Activated B cell treated with CpG ODN at 0.5 μM for 24 hours (primary cell): ENCODE measurements at regions of chr2 and their contacts with region 1.

Region 1: GRCh38 chr2:30266051-30266621 is 34.8 kb downstream of the LBH start:
- DNase-seq: no peak
- ATAC-seq: peak; percentile 80
- H3K4me3 Mint-ChIP-seq: peak overlapping the region; percentile 79
- H3K27ac Mint-ChIP-seq: peak overlapping the region; percentile 99
- H3K4me1 Mint-ChIP-seq: peaks cover 92% of the 10 kb centered on the region
- H3K27me3 Mint-ChIP-seq: no peaks in the 10 kb centered on the region
- CTCF ChIP-seq: no peak

Region 2: DNA sequence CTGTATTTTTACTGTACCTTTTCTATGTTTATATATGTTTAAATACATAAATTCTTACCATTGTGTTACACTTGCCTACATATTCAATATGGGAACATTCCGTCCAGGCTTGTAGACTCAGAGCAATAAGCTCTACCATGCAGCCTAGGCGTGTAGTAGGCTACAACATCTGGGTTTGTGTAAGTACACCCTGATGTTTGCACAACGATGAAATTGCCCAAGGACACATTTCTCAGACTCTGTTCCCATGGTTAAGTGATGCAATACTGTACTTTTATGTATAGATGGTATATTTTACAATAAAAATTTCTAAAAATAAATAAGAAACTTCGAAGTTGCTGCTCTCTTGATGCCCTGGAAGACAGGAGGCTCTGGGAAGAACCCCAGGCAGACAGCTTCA is 81.0 kb before region 1 on chr2:
- CTCF ChIA-PET with region 1: no interaction called
- POLR2A ChIA-PET with region 1: no interaction called
- intact Hi-C with region 1: no loop called
- DNase-seq: no peak
- ATAC-seq: no peak
- H3K4me3 Mint-ChIP-seq: no peak overlapping the region
- H3K27ac Mint-ChIP-seq: no peak overlapping the region
- H3K4me1 Mint-ChIP-seq: peaks cover 9% of the 10 kb centered on the region
- H3K27me3 Mint-ChIP-seq: no peaks in the 10 kb centered on the region
- CTCF ChIP-seq: no peak

Region 3: GRCh38 chr2:30282086-30282485 is 15.9 kb after region 1 on chr2:
- CTCF ChIA-PET with region 1: interaction called, 4 read pairs
- POLR2A ChIA-PET with region 1: interaction called, 43 read pairs
- intact Hi-C with region 1: loop called (anchors 2 kb)
- DNase-seq: peak; percentile 70
- ATAC-seq: peak; percentile 96
- H3K4me3 Mint-ChIP-seq: peak overlapping the region; percentile 61
- H3K27ac Mint-ChIP-seq: peak overlapping the region; percentile 82
- H3K4me1 Mint-ChIP-seq: peaks cover 98% of the 10 kb centered on the region
- H3K27me3 Mint-ChIP-seq: no peaks in the 10 kb centered on the region
- CTCF ChIP-seq: no peak

Region 4: GRCh38 chr2:30611583-30611982 is 345.4 kb after region 1 on chr2:
- CTCF ChIA-PET with region 1: no interaction called
- POLR2A ChIA-PET with region 1: no interaction called
- intact Hi-C with region 1: no loop called
- DNase-seq: no peak
- ATAC-seq: no peak
- H3K4me3 Mint-ChIP-seq: no peak overlapping the region
- H3K27ac Mint-ChIP-seq: no peak overlapping the region
- H3K4me1 Mint-ChIP-seq: peaks cover 29% of the 10 kb centered on the region
- H3K27me3 Mint-ChIP-seq: no peaks in the 10 kb centered on the region
- CTCF ChIP-seq: no peak

Region 5: DNA sequence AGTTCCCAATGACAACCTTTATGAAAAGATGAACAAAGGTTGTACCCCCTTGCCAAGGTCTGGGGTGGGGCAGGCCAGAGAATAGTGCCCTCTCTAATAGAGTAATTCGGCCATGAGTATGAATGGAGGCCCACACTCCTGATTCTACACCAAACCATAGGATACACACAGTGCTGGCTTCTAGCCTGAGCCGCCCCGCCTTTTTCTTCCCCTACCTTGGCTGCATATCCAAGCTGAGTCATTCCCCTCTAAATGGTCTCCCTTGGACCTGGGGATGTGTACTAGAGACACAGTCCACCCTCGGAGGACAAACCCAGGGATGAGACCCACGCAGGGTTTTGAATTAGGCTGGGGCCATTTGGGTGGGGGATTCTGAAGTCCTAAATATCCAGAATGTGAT is 648.3 kb after region 1 on chr2:
- CTCF ChIA-PET with region 1: no interaction called
- POLR2A ChIA-PET with region 1: no interaction called
- intact Hi-C with region 1: no loop called
- DNase-seq: no peak
- ATAC-seq: no peak
- H3K4me3 Mint-ChIP-seq: no peak overlapping the region
- H3K27ac Mint-ChIP-seq: no peak overlapping the region
- H3K4me1 Mint-ChIP-seq: no peaks in the 10 kb centered on the region
- H3K27me3 Mint-ChIP-seq: no peaks in the 10 kb centered on the region
- CTCF ChIP-seq: no peak